Ascending aorta (tissue), 2 donors: ENCODE measurements at regions of chr1 and their contacts with region 1.

Region 1: GRCh38 chr1:64042331-64043100 is 160.9 kb upstream of the UBE2U start:
- DNase-seq: peak; percentile 16 to 89
- H3K4me3 ChIP-seq: no peak overlapping the region
- H3K27ac ChIP-seq: peak overlapping the region; percentile 80 to 85
- H3K4me1 ChIP-seq: peaks cover 5 to 57% of the 10 kb centered on the region in 2 donors
- H3K27me3 ChIP-seq: no peaks in the 10 kb centered on the region
- CTCF ChIP-seq: no peak

Region 2: DNA sequence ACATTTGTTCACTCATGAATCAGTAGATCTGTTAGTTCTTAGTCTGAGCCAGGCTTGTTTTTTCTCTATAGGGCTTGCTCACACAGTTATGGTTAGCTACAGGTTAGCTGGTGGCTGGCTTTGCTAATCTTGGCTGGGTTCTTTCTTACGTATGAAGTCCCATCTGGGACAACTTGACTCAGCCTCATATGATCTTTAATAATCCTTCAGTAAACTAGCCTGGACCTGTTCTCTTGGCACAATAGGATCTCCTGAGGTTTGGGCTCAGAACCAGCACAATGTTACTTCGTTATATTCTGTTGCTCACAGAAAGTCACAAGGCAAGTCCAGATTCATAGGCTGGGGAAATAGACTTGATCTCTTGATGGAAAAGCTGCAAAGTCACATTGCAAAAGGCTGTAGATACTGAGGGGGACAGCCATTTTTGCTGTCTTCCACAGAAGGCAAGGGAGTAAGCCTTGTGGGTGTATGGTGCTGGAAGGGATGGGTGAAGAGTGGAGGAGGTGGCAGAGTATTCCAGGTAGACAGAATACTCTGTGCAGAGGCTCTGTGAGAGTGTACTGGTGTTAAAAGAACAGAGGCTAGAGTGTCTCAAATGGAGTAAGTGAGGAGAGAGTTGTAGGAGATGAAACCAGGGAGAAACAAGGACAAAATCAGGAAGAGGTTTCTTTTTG is 494.8 kb before region 1 on chr1:
- intact Hi-C with region 1: no loop called
- DNase-seq: no peak
- H3K4me3 ChIP-seq: no peak overlapping the region
- H3K27ac ChIP-seq: no peak overlapping the region
- H3K4me1 ChIP-seq: no peaks in the 10 kb centered on the region
- H3K27me3 ChIP-seq: no peaks in the 10 kb centered on the region
- CTCF ChIP-seq: no peak

Region 3: DNA sequence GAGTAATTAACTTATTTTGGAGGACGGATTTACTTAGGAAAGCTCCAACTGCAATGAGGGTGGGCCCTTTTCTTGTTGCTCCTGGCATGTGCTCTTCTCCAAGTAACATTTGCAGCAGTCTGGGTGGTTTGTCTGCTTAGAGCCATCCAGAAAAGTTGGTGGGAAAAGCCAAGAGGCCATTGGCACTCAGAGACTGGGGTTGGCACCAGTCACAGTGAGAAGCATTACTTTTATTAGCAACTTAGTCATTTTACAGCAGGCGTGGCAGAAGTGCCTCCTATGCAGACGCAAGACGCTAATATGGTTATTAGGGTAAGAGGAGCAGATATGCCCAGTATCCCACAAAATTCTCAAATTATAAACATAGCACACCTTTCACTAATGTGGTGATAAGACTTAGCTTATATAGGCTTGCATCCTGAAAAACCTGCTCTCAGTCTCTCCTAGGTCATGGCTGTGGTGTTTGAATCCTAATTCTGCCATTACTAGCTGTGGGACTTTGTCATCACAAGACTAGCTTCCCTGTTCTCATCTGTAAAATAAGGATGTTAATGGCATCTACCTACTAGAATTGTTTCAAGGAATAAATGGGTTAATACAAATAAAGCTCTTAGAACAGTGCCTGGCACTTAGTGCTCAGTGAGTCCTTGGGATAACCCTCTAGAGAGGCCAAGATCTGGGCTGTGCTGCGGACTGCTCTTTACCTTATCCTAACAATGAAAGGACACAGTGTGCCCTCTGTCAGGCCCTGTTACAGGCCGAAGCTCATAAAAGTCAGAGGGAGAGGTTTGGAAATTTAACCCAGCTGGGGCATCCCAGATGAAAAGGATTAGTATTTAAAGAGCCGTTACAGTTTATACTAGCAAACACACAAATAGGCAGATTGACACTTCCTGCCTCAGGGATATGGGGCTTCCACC is 114.1 kb before region 1 on chr1:
- intact Hi-C with region 1: loop called (anchors 2 kb)
- DNase-seq: peak in 1 of 2 donors; percentile 87
- H3K4me3 ChIP-seq: peak overlapping the region in 1 of 2 donors; percentile 26
- H3K27ac ChIP-seq: peak overlapping the region; percentile 92 to 93
- H3K4me1 ChIP-seq: peaks cover 16 to 37% of the 10 kb centered on the region in 2 donors
- H3K27me3 ChIP-seq: no peaks in the 10 kb centered on the region
- CTCF ChIP-seq: no peak

Region 4: DNA sequence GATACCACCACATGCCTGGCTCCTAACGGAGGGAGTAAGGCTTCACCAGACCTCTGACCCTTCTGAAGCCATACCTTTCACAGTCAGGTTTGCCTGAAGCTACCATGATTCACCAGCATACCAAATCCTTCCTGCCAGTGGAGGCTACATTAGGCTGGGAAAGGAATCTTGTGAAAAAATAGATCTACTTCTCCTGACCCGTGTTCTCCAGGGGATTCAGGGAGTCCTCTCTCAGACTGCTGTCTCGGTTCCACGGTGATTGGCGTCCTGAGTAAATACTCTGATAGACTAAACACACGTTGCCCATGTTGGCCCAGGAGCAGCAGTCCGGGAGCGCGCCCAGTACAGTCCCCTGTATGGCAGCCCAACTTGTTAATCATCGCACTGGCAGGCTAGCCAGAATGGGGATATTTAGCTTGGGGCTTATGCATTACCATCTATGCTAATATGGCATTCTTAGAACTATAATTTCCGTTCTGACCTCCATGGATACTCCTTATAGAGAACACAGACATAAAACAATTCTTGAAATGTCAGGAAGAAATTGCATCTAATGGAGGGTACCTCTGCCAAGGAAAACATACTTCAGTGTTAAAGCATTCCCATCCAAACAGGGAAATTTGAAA is 95.5 kb before region 1 on chr1:
- intact Hi-C with region 1: loop called (anchors 5 kb)
- DNase-seq: peak; percentile 69 to 93
- H3K4me3 ChIP-seq: peak overlapping the region in 1 of 2 donors; percentile 13
- H3K27ac ChIP-seq: peak overlapping the region; percentile 86 to 93
- H3K4me1 ChIP-seq: peaks cover 12 to 70% of the 10 kb centered on the region in 2 donors
- H3K27me3 ChIP-seq: no peaks in the 10 kb centered on the region
- CTCF ChIP-seq: no peak

Region 5: DNA sequence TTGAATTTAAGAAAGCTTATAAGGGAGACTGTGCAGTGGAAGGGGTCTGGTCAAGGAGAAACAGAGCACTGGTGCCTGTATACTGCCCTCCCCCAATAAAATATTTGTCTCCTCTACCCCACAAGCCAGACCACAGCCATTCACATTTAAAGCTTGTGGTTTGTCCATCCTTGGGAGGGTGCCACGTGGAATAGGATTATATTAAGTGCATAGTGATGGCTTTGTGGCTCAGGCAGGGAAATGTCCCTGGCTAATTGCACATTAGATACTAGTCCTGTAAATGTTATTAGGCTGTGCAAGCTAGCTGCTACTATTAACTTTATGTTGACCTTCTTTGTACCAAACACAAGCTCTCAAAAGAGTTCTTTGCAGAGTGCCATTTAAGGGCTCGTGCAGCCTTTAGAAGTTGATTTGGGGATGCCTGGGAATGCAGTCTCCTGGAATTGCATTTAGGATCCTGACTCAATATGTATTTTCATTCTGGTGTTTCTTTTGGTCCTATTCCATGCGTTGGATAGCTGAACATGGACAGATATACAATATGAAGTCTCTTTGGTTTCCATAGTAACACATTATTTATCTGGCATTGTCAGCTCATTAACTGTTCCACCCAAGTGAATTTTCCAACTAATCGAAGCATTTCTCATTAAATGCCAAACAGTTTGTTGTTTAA is 58.1 kb before region 1 on chr1:
- intact Hi-C with region 1: loop called (anchors 5 kb)
- DNase-seq: no peak
- H3K4me3 ChIP-seq: peak overlapping the region in 1 of 2 donors; percentile 16
- H3K27ac ChIP-seq: peak overlapping the region; percentile 54 to 65
- H3K4me1 ChIP-seq: peaks cover 14 to 39% of the 10 kb centered on the region in 2 donors
- H3K27me3 ChIP-seq: no peaks in the 10 kb centered on the region
- CTCF ChIP-seq: no peak

Region 6: DNA sequence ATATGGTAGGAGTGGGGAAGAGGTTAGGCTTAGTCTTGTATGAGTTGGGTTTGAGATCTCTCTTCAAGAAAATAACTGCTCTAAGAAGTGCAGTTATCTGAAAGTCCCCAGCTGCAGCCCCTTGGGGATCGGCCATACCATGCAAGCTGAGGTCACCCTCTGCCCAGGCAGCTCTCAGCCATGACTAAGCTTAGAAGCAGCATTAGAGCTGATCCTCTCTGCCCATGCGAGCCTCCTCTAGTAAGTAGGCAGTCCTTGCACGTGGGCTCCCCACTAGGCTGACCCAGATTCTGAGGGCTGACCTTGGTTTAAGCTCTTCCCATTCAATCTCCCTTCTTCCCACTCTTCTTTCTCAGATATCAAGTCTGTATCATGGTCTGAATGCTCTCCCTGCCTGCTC is 39.9 kb after region 1 on chr1:
- intact Hi-C with region 1: loop called (anchors 5 kb)
- DNase-seq: peak in 1 of 2 donors; percentile 65
- H3K4me3 ChIP-seq: no peak overlapping the region
- H3K27ac ChIP-seq: peak overlapping the region in 1 of 2 donors; percentile 57
- H3K4me1 ChIP-seq: peaks cover 12 to 41% of the 10 kb centered on the region in 2 donors
- H3K27me3 ChIP-seq: no peaks in the 10 kb centered on the region
- CTCF ChIP-seq: no peak

Region 7: DNA sequence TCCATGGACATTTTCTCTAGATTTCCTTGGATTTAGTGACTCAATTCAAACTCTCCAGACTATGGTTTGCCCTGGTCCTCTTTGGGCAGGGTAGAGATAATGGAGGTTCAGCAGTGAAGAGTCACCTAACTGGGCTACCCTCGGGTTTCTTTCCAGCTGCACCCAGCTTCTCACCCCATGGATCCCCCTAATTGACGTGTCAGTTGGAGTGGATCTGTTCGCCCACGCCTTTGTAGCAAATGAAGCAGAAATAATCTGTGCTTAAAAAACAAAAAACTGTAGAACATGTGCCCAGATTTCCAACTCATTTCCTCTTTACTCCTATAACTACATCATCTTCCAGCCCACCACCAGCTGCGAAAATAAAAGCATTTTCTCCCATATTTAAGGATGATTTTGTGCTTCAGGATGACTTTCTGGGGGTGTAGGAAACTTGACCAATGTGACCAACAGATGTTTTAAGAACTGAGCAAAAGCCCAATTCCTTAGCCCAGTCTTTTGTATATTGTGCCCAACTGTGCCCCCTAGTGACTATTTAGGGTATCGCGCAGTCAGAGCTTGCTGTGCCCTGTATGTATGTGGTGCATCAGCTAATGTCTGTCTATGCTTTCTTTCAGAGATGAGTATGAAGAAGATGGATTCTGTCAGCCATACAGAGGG is 94.4 kb after region 1 on chr1:
- intact Hi-C with region 1: loop called (anchors 2 kb)
- DNase-seq: peak; percentile 23 to 90
- H3K4me3 ChIP-seq: no peak overlapping the region
- H3K27ac ChIP-seq: peak overlapping the region; percentile 37 to 64
- H3K4me1 ChIP-seq: peaks cover 4 to 42% of the 10 kb centered on the region in 2 donors
- H3K27me3 ChIP-seq: no peaks in the 10 kb centered on the region
- CTCF ChIP-seq: peak; percentile 83 to 90 (median 88)